Left cardiac atrium (tissue), 4 donors: ENCODE measurements at regions of chr22 and their contacts with region 1.

Region 1: DNA sequence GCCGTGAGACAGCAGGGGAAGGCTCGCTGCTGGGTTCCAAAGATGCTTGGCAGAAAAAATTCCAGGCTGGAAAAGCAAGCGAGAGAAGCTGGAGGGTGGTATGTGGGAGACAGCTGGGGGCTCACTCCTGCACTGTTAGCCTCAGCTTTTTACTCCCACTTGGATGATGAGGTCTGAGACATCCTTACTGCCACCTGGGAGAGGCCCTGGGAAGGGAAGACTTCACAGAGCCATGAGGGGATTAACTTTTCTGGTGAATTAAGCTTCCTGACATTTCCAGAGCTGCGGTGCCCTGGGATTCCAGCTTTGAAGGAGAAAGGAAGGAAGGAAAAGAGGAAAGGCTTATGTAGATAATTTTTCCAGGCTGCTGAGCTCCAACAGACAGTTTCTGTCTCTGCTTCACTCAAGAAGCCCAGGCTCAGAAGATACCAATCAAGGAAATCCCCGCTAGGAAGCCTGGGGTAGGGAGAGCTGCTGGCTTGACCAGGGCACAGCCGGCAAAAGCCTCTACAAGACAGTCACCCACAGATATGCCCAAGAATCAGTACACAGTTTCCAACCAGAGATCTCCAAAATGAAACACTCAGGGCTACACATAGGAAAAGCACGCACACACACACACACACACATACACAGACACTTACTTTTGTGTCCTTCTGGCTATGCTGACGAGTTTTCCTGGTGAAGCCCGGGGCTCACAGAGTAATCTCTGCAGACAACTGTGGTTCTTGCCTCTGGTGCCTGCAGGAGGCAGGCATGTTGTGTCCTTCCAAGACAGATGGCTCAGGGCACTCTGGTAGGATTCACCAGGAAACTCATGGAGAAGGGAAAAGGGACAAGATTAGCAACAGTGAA is 907 bp downstream of the MCHR1 start:
- DNase-seq: no peak
- ATAC-seq: no peak

Region 2: GRCh38 chr22:40739721-40740120 is 59.5 kb after region 1 on chr22:
- intact Hi-C with region 1: no loop called
- DNase-seq: no peak
- ATAC-seq: no peak

Region 3: GRCh38 chr22:40757071-40757470 is 76.9 kb after region 1 on chr22:
- intact Hi-C with region 1: loop called (anchors 2 to 5 kb)
- DNase-seq: no peak
- ATAC-seq: no peak

Region 4: GRCh38 chr22:40764763-40765441 is 84.7 kb after region 1 on chr22:
- intact Hi-C with region 1: loop called in 1 of 2 experiments (anchors 2 kb)
- DNase-seq: no peak
- ATAC-seq: no peak

Region 5: DNA sequence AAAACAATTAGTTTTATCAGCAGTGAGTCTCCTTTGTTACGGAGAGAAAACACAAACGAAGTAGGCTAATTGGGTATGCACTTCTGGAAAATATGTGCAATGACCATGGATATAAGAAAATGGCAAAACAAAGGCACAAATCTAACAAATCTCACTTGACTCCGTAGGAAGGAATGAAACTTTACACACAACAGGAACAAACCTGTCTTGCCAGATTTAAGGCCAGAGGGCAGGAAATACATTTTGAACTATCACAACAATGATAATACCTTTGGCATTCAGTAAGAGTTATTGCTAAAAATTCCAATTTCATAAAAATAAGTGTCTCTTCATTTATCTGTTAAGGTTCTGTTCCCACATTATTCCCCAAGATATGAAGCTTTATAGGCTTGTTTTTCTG is 102.3 kb after region 1 on chr22:
- intact Hi-C with region 1: no loop called
- DNase-seq: no peak
- ATAC-seq: no peak